Vagina (tissue), 2 donors: ENCODE measurements at regions of chr3 and their contacts with region 1.

Region 1: GRCh38 chr3:24264748-24265158 is 229.9 kb downstream of the THRB start:
- DNase-seq: no peak
- H3K4me3 ChIP-seq: no peak overlapping the region
- H3K27ac ChIP-seq: no peak overlapping the region
- H3K4me1 ChIP-seq: no peaks in the 10 kb centered on the region
- H3K27me3 ChIP-seq: no peaks in the 10 kb centered on the region
- CTCF ChIP-seq: peak; percentile 26 to 69 (median 43)
- POLR2A ChIP-seq: no peak

Region 2: GRCh38 chr3:23095017-23095416 is 1169.7 kb before region 1 on chr3:
- intact Hi-C with region 1: no loop called
- DNase-seq: no peak
- H3K4me3 ChIP-seq: no peak overlapping the region
- H3K27ac ChIP-seq: no peak overlapping the region
- H3K4me1 ChIP-seq: no peaks in the 10 kb centered on the region
- H3K27me3 ChIP-seq: no peaks in the 10 kb centered on the region
- CTCF ChIP-seq: no peak
- POLR2A ChIP-seq: no peak

Region 3: DNA sequence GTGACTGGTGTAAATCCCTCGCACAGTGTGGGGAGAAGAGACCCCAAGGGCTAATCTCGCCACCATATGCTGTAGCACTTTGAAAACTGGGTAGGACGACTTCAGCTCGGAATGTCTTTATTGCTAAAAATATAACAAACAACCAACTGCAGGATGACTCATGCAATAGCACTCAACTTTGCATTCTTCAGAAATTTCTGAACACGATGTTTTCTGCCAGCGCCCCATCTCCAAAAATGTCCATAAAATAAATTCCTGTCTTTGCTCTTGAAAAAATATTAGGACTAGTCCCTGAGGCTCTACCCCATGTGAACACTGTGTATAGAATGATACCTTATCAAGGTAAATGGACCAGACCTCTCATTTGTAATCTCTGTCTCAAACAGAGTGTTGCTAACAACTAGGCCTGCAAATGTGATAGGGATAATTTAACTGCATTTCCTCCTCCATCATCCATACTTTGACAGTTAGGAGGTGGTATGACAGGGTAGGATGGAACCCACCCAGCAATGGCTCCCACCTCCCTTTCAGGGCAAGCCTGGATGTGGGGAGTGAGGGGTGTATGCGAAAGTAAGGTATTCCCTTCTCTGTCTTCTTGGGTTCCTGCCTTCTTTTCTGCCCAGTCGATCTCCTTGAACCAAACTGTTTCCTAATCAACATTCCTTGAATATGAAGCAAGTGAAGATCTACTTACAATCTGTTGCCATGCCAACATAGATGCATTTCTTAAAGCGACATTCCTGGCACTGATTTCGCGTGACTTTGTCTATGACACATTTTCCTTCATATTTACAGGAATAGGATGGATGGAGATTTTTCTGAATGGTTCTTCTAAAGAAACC is 118.6 kb before region 1 on chr3:
- intact Hi-C with region 1: no loop called
- DNase-seq: no peak
- H3K4me3 ChIP-seq: no peak overlapping the region
- H3K27ac ChIP-seq: peak overlapping the region; percentile 56
- H3K4me1 ChIP-seq: peaks cover 17% of the 10 kb centered on the region
- H3K27me3 ChIP-seq: no peaks in the 10 kb centered on the region
- CTCF ChIP-seq: no peak
- POLR2A ChIP-seq: no peak

Region 4: GRCh38 chr3:24494618-24495325 is 230.0 kb after region 1 on chr3 and contains the start of gene THRB:
- intact Hi-C with region 1: loop called (anchors 10 kb)
- DNase-seq: no peak
- H3K4me3 ChIP-seq: peak within 1 kb of the TSS; percentile 80 to 85
- H3K27ac ChIP-seq: peak within 1 kb of the TSS; percentile 93
- H3K4me1 ChIP-seq: peaks cover 46% of the 10 kb centered on the region
- H3K27me3 ChIP-seq: no peaks in the 10 kb centered on the region
- CTCF ChIP-seq: peak in 1 of 3 experiments; percentile 18
- POLR2A ChIP-seq: peak in 1 of 2 donors; percentile 43
- total RNA-seq, gene THRB: 22.8 TPM